Activated naive CD4-positive, alpha-beta T cell treated with anti-CD3 and anti-CD28 coated beads for 36 hours (primary cell): ENCODE measurements at regions of chr1 and their contacts with region 1.

Region 1: DNA sequence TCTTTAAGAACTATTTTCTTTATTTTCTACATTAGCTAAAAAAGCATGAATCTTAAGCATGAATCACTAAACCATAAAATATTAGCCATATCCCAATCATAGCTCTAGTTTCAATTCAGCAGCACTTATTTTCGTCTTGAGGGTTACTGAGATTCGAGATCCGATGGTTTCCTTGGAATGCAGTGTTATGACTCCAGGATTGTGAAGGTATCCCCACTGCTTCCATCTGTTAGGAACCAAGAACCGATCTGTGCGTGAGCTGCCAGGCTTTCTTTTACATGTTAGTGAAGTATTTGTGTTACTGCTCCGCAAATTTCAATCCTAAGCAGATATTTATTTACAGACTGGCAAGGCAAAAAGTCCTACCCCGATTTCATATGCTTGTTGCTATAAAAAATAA is 18.8 kb downstream of the TNFRSF9 start:
- DNase-seq: no peak
- H3K4me3 Mint-ChIP-seq: no peak overlapping the region
- H3K27ac Mint-ChIP-seq: no peak overlapping the region
- H3K4me1 Mint-ChIP-seq: peaks cover 27% of the 10 kb centered on the region
- H3K27me3 Mint-ChIP-seq: no peaks in the 10 kb centered on the region

Region 2: GRCh38 chr1:7549277-7550161 is 372.3 kb before region 1 on chr1:
- CTCF ChIA-PET with region 1: no interaction called
- intact Hi-C with region 1: loop called (anchors 1 kb)
- DNase-seq: peak; percentile 82
- H3K4me3 Mint-ChIP-seq: peak overlapping the region; percentile 49
- H3K27ac Mint-ChIP-seq: peak overlapping the region; percentile 94
- H3K4me1 Mint-ChIP-seq: peaks cover 13% of the 10 kb centered on the region
- H3K27me3 Mint-ChIP-seq: peaks cover 16% of the 10 kb centered on the region

Region 3: GRCh38 chr1:7670334-7671145 is 251.3 kb before region 1 on chr1:
- CTCF ChIA-PET with region 1: no interaction called
- intact Hi-C with region 1: no loop called
- DNase-seq: no peak
- H3K4me3 Mint-ChIP-seq: no peak overlapping the region
- H3K27ac Mint-ChIP-seq: no peak overlapping the region
- H3K4me1 Mint-ChIP-seq: peaks cover 1% of the 10 kb centered on the region
- H3K27me3 Mint-ChIP-seq: peaks cover 3% of the 10 kb centered on the region

Region 4: DNA sequence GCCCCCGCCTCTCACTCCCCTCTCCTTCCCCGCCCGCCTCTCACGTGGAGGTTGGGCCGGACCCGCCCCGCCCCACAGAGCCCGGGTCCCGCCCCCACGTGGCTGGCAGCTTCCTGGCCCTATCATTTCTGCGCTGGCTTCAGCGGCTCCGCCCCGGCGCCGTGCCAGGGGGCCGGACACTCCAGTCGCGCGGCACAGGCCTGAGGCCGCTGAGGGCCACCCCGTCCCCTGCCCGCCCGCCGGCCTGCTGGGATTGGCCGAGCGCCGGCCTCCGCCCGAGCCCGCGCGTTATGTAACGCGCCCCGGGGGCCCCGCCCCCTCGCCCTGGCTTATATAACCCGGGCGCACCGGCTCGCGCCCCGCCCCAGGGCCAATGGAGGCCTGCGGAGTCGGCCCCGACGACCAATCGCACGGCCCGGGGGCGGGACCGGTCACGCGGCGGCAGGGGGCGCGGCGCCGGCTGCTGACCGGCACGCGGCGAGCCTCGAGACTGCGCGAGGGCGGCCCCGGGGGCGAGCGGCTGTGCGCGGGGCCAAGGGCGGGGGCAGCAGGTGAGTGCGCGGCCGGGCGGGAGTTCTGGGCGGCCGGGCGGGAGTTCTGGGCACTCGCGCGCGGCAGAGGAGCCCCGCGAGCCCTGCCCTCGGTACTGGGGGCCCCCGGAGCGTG is 137.8 kb before region 1 on chr1 and contains the start of gene PER3:
- CTCF ChIA-PET with region 1: no interaction called
- intact Hi-C with region 1: no loop called
- DNase-seq: peak; percentile 85
- H3K4me3 Mint-ChIP-seq: peak within 1 kb of the TSS; percentile 70
- H3K27ac Mint-ChIP-seq: no peak within 1 kb of the TSS
- H3K4me1 Mint-ChIP-seq: peaks cover 22% of the 10 kb centered on the region
- H3K27me3 Mint-ChIP-seq: no peaks in the 10 kb centered on the region
- total RNA-seq, gene PER3: 2.9 to 3.1 TPM

Region 5: GRCh38 chr1:7902478-7903085 is 19.2 kb before region 1 on chr1:
- CTCF ChIA-PET with region 1: interaction called, 3 read pairs
- intact Hi-C with region 1: loop called (anchors 1 kb)
- DNase-seq: peak; percentile 73
- H3K4me3 Mint-ChIP-seq: peak overlapping the region; percentile 62
- H3K27ac Mint-ChIP-seq: no peak overlapping the region
- H3K4me1 Mint-ChIP-seq: peaks cover 6% of the 10 kb centered on the region
- H3K27me3 Mint-ChIP-seq: no peaks in the 10 kb centered on the region

Region 6: GRCh38 chr1:7940745-7941436 is 19.1 kb after region 1 on chr1 and contains the start of gene TNFRSF9:
- CTCF ChIA-PET with region 1: interaction called, 3 read pairs
- intact Hi-C with region 1: loop called (anchors 1 kb)
- DNase-seq: peak; percentile 89
- H3K4me3 Mint-ChIP-seq: peak within 1 kb of the TSS; percentile 75
- H3K27ac Mint-ChIP-seq: peak within 1 kb of the TSS; percentile 68
- H3K4me1 Mint-ChIP-seq: peaks cover 50% of the 10 kb centered on the region
- H3K27me3 Mint-ChIP-seq: peaks cover 13% of the 10 kb centered on the region
- total RNA-seq, gene TNFRSF9: 10.5 to 11.6 TPM

Region 7: DNA sequence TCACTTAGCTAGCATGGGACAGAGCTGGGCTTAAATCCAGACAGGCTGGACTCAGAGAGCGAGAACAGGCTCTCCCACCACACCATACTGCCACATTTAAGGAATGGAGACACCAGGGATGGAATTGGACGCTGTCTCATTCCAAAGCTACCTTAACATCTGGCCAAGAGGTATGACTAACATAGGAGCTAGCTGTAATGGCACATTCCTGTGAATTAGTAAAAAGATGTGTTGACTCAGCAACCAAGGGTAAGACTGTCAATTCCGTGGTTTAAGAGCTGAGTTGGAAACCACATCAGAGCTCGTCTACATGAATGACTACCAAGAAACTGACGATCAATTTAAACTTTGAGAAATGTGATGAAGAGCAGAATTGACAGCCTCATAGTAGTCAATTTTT is 27.2 kb after region 1 on chr1:
- CTCF ChIA-PET with region 1: interaction called, 3 read pairs
- intact Hi-C with region 1: loop called (anchors 1 kb)
- DNase-seq: peak; percentile 57
- H3K4me3 Mint-ChIP-seq: peak overlapping the region; percentile 15
- H3K27ac Mint-ChIP-seq: peak overlapping the region; percentile 68
- H3K4me1 Mint-ChIP-seq: peaks cover 26% of the 10 kb centered on the region
- H3K27me3 Mint-ChIP-seq: no peaks in the 10 kb centered on the region

Region 8: GRCh38 chr1:7961216-7962015 is 39.6 kb after region 1 on chr1 and contains the start of gene PARK7:
- CTCF ChIA-PET with region 1: no interaction called
- intact Hi-C with region 1: loop called (anchors 2 kb)
- DNase-seq: peak; percentile 100
- H3K4me3 Mint-ChIP-seq: peak within 1 kb of the TSS; percentile 99
- H3K27ac Mint-ChIP-seq: peak within 1 kb of the TSS; percentile 98
- H3K4me1 Mint-ChIP-seq: peaks cover 53% of the 10 kb centered on the region
- H3K27me3 Mint-ChIP-seq: no peaks in the 10 kb centered on the region
- total RNA-seq, gene PARK7: 373 to 397 TPM